A673 (cell line): ENCODE measurements at regions of chr5 and their contacts with region 1.

Region 1: DNA sequence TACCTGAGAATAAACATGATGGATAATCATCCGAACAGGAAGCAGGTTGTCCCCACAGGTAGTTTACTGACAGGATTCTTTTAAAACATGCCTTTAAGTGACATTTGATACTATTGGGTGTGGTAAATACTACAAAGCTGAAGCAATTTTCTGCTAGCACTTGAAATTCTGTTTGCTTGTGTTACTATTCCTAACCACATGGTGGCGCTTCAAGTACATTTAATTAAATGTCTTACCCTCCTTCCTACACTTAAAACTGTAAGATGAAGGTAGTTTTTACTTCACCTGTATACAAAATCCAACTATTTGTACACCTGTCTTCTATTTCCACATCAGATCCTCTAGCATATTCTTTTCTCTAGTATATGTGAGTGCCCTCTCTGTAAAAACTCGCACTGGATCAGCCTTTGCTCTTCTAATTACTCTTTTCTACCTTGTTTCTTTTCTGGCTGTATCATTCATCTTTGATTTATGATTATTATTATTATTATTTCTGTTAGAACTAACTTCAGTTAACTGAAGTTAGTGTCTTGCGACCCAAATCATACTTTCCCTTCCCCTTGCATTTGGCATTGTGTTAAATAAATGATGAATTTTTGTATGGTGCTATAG is 18.4 kb downstream of the SLC25A46 start:
- DNase-seq: peak; percentile 59
- H3K4me3 ChIP-seq: no peak overlapping the region
- H3K27ac ChIP-seq: no peak overlapping the region
- H3K4me1 ChIP-seq: no peaks in the 10 kb centered on the region
- H3K27me3 ChIP-seq: no peaks in the 10 kb centered on the region
- CTCF ChIP-seq: peak; percentile 72

Region 2: GRCh38 chr5:110865400-110866094 is 108.3 kb after region 1 on chr5:
- CTCF ChIA-PET with region 1: no interaction called
- POLR2A ChIA-PET with region 1: no interaction called
- intact Hi-C with region 1: loop called (anchors 10 kb)
- DNase-seq: peak; percentile 56
- H3K4me3 ChIP-seq: no peak overlapping the region
- H3K27ac ChIP-seq: no peak overlapping the region
- H3K4me1 ChIP-seq: no peaks in the 10 kb centered on the region
- H3K27me3 ChIP-seq: no peaks in the 10 kb centered on the region
- CTCF ChIP-seq: peak; percentile 73

Region 3: GRCh38 chr5:111092062-111092853 is 335.0 kb after region 1 on chr5 and contains the start of gene WDR36:
- CTCF ChIA-PET with region 1: no interaction called
- POLR2A ChIA-PET with region 1: no interaction called
- intact Hi-C with region 1: loop called (anchors 10 kb)
- DNase-seq: peak; percentile 96
- H3K4me3 ChIP-seq: peak within 1 kb of the TSS; percentile 73
- H3K27ac ChIP-seq: peak within 1 kb of the TSS; percentile 74
- H3K4me1 ChIP-seq: no peaks in the 10 kb centered on the region
- H3K27me3 ChIP-seq: no peaks in the 10 kb centered on the region
- CTCF ChIP-seq: no peak
- total RNA-seq, gene WDR36: 32.4 and 33.0 TPM in 2 replicates

Region 4: DNA sequence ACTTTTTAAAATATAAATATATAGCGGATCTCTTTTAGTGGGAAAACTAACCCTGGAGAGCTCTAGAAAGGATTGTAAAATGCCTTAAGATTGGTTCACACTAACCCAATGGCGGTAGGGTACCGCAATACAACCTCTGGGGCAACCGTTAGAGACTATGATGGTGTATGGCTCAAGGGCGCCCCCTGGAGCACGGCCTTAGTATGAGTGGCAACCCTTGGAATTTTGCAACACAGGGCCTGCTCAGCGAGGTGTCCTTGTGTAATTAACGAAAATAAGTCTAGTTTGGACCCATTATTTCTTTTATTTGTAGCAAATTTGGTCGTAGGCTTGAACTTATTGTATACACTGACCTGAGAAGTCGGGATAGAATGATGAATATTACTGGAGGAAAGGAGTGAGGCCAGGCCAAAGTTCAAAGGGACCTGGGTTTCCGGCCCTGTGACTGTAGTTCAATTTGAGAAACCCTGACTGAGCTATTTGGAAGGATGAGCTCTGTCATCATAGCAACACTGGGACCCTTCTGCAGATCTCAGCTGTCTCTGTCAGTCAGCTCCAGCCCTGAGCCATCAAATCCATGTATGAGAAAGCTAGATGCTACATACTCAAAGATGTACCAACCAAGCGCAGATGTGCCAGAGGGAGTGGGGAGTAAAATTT is 521.8 kb after region 1 on chr5:
- CTCF ChIA-PET with region 1: interaction called, 5 read pairs
- POLR2A ChIA-PET with region 1: no interaction called
- intact Hi-C with region 1: loop called (anchors 2 kb)
- DNase-seq: peak; percentile 72
- H3K4me3 ChIP-seq: no peak overlapping the region
- H3K27ac ChIP-seq: no peak overlapping the region
- H3K4me1 ChIP-seq: no peaks in the 10 kb centered on the region
- H3K27me3 ChIP-seq: peaks cover 18% of the 10 kb centered on the region
- CTCF ChIP-seq: peak; percentile 89